Caco-2 (cell line): ENCODE measurements at regions of chr9 and their contacts with region 1.

Region 1: DNA sequence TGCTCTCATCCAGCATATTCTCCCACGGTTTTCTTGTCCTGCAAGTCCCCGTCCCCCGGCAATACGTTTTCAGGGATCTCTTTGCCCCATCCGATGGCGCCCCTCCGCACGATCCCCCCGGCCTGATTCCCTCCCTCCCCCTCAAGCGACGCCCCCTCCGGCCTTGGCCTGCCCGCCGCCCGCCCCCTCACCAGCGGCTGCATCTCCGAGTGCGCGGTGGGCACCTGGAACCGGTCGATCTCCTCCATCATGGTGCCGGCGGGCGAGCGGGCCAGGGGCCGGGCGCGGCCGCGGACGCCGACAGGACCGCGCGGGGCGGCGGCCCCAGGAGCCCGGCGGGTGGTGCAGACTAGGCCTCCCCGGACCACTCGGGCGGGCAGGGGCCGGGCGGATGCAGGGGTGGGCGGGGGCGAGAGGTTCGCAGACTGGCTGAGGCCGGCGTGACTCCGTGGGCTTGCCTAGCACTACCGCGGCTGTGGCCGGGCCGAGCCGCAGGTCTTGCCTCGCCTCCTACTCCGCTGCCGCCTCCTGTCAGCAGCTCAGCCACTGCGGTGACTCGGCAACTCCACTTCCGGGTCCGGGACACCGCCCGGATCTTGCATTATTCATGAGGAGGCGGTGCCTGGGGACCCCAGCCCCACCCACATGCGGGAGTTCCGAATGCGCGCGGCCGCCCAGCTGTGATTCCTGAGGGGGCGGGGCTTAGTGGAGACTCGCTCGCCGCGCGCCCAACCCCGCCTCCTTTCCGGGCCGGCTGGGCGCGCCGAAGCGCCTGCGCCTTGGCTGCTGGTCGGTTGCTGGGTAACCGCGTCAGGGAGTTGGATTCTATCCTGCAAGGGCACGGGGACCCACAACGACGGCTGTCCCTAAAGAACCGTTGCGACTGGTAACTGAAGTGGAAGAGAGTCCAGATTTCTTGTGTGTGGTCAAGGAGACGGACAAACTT is at the starts of genes DNAI1 and FAM219A:
- DNase-seq: peak; percentile 98 to 99
- H3K4me3 ChIP-seq: peak within 1 kb of the TSS; percentile 55
- H3K4me3 Mint-ChIP-seq: peak within 1 kb of the TSS; percentile 81
- H3K27ac Mint-ChIP-seq: peak within 1 kb of the TSS; percentile 73
- H3K4me1 ChIP-seq: no peaks in the 10 kb centered on the region; the same call in 1 of the 2 replicates
- H3K4me1 Mint-ChIP-seq: peaks cover 16% of the 10 kb centered on the region
- H3K27me3 ChIP-seq: no peaks in the 10 kb centered on the region
- H3K27me3 Mint-ChIP-seq: no peaks in the 10 kb centered on the region
- CTCF ChIP-seq: no peak
- total RNA-seq, gene DNAI1: 0.52 and 0.67 TPM in 2 replicates
- total RNA-seq, gene FAM219A: 13.4 and 14.7 TPM in 2 replicates

Region 2: DNA sequence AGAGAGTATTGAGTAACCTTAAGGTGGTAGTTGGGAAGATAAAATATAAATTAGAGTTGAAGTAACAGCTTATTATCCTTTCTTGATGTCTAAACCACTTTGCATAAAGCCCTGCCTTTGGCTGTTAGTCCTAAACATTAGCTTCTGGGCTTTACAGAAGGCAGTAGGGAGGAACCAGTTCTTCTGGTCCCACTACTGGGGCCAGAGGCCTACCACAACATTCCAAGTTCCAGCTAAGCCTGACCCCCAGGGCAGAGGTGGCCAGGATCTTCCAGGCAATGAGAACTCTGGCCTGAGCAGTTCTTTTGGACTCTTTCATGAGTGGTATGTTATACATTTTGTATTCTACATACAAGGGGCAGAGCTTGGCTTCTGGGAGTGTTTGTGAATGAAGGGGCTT is 26.4 kb after region 1 on chr9:
- CTCF ChIA-PET with region 1: no interaction called
- POLR2A ChIA-PET with region 1: no interaction called
- intact Hi-C with region 1: loop called (anchors 1 kb)
- DNase-seq: peak; percentile 78 to 79
- H3K4me3 ChIP-seq: no peak overlapping the region
- H3K4me3 Mint-ChIP-seq: no peak overlapping the region
- H3K27ac Mint-ChIP-seq: no peak overlapping the region
- H3K4me1 ChIP-seq: peaks cover 15% of the 10 kb centered on the region
- H3K4me1 Mint-ChIP-seq: no peaks in the 10 kb centered on the region
- H3K27me3 ChIP-seq: no peaks in the 10 kb centered on the region
- H3K27me3 Mint-ChIP-seq: no peaks in the 10 kb centered on the region
- CTCF ChIP-seq: no peak

Region 3: DNA sequence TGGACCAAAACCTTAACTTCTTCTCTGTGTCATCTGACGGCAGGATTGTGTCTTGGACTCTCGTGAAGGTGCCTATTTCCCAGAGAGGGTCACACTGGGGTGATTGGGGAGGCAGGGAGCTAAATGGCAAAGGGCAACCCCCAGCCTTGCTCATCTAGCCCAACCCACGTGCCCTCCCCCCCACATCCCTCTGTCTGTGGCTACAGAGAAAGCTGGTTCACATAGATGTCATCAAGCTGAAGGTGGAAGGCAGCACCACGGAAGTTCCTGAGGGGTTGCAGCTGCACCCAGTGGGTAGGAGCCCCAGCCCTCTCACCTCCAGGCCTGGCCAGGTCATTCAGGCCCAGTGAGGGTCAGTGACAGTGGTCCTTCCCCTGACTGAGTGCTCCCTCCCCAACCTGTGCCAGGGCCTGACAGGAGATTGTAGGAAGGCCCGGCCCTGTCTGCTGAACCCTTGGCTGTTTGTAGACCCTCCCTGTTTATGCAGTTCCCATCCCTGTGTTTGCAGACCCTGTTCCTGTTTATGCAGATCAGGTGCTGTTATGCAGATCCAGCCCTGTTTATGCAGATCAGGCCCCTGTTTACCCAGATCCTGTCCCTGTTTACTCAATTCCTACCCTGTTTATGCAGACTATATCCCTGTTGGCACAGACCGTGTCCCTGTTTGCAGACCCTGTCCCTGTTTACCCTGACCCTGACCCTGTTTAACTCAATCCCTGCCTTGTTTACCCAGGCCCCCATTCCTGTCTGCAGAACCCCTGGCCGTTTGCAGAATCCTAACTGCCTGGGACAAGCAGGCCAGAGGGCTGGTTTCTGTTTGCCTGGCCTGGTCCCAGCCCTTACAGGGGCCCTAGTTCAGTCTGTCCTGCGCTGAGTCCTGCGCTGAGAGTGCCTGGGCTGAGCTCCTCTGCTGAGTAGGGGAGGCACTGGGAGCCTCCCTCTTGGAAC is 54.1 kb after region 1 on chr9:
- CTCF ChIA-PET with region 1: no interaction called
- POLR2A ChIA-PET with region 1: no interaction called
- intact Hi-C with region 1: no loop called
- DNase-seq: peak in 1 of 2 experiments; percentile 24
- H3K4me3 ChIP-seq: no peak overlapping the region
- H3K4me3 Mint-ChIP-seq: no peak overlapping the region
- H3K27ac Mint-ChIP-seq: no peak overlapping the region
- H3K4me1 ChIP-seq: no peaks in the 10 kb centered on the region
- H3K4me1 Mint-ChIP-seq: no peaks in the 10 kb centered on the region
- H3K27me3 ChIP-seq: no peaks in the 10 kb centered on the region; the same call in 1 of the 2 replicates
- H3K27me3 Mint-ChIP-seq: peaks cover 3% of the 10 kb centered on the region
- CTCF ChIP-seq: no peak

Region 4: GRCh38 chr9:34522971-34523797 is 64.9 kb after region 1 on chr9 and contains the start of gene ENHO:
- CTCF ChIA-PET with region 1: no interaction called
- POLR2A ChIA-PET with region 1: no interaction called
- intact Hi-C with region 1: loop called (anchors 1 kb)
- DNase-seq: peak; percentile 88 to 95
- H3K4me3 ChIP-seq: peak within 1 kb of the TSS; percentile 44
- H3K4me3 Mint-ChIP-seq: peak within 1 kb of the TSS; percentile 74
- H3K27ac Mint-ChIP-seq: no peak within 1 kb of the TSS
- H3K4me1 ChIP-seq: peaks cover 3% of the 10 kb centered on the region; the same call in 1 of the 2 replicates
- H3K4me1 Mint-ChIP-seq: peaks cover 7% of the 10 kb centered on the region
- H3K27me3 ChIP-seq: no peaks in the 10 kb centered on the region
- H3K27me3 Mint-ChIP-seq: peaks cover 14% of the 10 kb centered on the region
- CTCF ChIP-seq: no peak
- total RNA-seq, gene ENHO: 1.00 and 2.1 TPM in 2 replicates